AG04450 (cell line): ENCODE measurements at regions of chr6 and their contacts with region 1.

Region 1: DNA sequence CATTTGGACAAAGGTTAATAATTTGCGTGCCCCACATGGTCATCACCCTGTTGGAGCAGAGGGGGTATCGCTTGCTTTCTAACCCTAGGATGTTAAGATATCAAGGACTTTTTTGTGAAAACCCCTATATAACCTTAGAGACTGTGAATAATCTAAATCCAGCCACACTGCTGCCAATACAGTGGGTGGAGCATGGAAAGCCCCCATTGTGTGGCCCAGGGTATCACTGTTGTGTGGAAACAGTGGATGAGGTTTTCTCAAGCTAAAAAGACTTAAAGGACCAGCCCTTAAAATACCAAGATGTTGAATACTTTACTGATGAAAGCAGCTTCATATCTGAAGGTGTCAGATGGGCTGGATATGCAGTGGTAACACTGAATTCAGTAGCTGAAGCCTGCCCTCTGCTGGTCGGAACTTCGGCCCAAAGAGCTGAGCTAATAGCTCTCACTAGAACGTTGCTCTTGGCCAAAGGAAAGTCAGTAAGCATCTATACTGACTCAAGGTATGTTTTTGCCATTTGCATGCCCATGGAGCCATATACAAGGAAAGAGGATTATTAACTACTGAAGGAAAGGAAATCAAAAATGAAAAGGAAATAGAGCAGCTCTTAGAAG is 695.2 kb downstream of the PHF3 start:
- DNase-seq: peak; percentile 51
- H3K4me3 ChIP-seq: no peak overlapping the region
- H3K27ac ChIP-seq: no peak overlapping the region
- H3K27me3 ChIP-seq: no peaks in the 10 kb centered on the region
- CTCF ChIP-seq: peak; percentile 81

Region 2: DNA sequence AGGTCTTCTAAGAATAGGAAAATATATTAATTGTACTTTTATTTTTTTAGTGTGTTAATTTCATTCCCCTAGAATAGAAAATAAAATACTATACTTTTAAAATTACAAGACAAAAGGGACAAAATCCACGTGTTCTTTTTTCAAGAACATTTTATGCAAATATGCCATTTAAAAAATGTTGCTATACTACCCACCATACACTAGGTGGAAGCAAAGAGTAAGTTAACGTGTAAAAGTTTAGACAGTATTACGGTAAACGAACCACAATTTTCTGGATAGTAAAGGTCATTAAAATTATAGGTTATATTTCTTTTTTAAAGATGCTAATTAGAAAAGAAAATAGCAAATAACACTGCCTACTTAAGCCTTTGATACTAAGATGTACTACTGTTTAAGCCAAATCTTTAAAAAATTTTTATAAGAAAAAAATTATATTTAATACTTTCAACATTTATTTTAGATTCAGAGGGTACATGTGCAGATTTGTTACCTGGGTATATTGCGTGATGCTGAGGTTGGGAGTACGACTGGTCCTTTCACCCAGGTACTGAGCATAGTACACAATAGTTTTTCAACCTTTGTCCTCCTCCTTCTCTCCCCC is 407.6 kb before region 1 on chr6:
- CTCF ChIA-PET with region 1: interaction called, 50 read pairs
- POLR2A ChIA-PET with region 1: no interaction called
- DNase-seq: peak; percentile 11
- H3K4me3 ChIP-seq: no peak overlapping the region
- H3K27ac ChIP-seq: no peak overlapping the region
- H3K27me3 ChIP-seq: no peaks in the 10 kb centered on the region
- CTCF ChIP-seq: peak; percentile 67

Region 3: DNA sequence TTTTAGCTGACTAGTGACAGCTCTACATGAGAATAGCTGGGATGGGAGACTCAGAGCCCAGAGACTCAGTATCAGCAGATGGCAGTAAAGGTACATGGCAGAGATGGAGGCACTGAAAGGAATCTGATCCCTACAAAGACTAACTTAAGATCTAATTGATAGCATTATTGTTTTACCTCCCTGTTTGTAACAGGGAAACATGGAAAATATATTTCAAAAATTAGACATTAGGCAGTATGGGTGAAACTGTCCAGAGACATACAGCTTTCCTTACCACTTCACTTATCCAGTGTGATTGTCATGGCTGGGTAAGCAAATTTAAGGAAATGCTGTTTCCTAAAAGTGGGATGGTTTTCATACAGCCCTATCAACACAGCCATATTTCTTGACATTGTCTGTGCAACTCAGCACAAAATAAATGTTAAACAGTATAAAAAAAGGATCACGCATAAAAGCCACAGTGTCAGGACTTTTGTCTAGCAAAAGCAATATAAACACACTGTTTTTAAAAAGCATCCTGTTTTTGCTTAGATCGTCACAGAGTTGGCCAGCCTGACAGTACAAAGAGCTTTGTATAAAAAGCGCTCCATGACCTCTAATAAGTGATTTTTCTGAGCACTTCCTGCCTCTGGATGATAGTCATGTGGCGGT is 318.3 kb before region 1 on chr6:
- CTCF ChIA-PET with region 1: interaction called, 192 read pairs
- POLR2A ChIA-PET with region 1: no interaction called
- DNase-seq: peak; percentile 55
- H3K4me3 ChIP-seq: no peak overlapping the region
- H3K27ac ChIP-seq: no peak overlapping the region
- H3K27me3 ChIP-seq: no peaks in the 10 kb centered on the region
- CTCF ChIP-seq: peak; percentile 99

Region 4: GRCh38 chr6:64128301-64129024 is 202.3 kb before region 1 on chr6:
- CTCF ChIA-PET with region 1: interaction called, 11 read pairs
- POLR2A ChIA-PET with region 1: no interaction called
- DNase-seq: no peak
- H3K4me3 ChIP-seq: no peak overlapping the region
- H3K27ac ChIP-seq: no peak overlapping the region
- H3K27me3 ChIP-seq: no peaks in the 10 kb centered on the region
- CTCF ChIP-seq: no peak

Region 5: DNA sequence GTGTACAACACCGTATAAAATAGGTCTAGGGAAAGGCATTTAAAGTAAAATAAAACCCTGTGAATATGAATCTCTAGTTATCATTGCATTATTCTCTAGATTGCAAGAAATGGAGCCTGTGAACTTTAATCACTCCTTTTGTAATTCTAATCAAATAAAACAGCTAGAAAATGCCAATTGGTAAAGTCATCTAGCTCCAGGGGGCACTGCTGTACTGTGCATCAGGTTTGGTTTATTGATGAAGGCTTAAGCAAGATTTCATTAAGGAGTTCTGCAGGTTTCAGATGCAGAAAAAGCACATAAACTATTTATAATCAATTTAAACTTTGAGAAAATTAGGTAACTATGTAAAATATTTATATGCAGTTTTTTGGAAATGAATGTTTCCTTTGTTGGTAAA is 50.2 kb before region 1 on chr6:
- CTCF ChIA-PET with region 1: interaction called, 53 read pairs
- POLR2A ChIA-PET with region 1: no interaction called
- DNase-seq: peak; percentile 27
- H3K4me3 ChIP-seq: no peak overlapping the region
- H3K27ac ChIP-seq: no peak overlapping the region
- H3K27me3 ChIP-seq: no peaks in the 10 kb centered on the region
- CTCF ChIP-seq: peak; percentile 69